ENCODE measurements at regions of chr2 and their contacts with region 1.

Region 1: GRCh38 chr2:125959047-125959446 is 696.9 kb upstream of the GYPC start:
- DNase-seq: no peak
- H3K4me3 ChIP-seq: no peak overlapping the region
- H3K4me3 Mint-ChIP-seq: no peak overlapping the region
- H3K27ac Mint-ChIP-seq: no peak overlapping the region
- H3K4me1 ChIP-seq: no peaks in the 10 kb centered on the region
- H3K4me1 Mint-ChIP-seq: no peaks in the 10 kb centered on the region
- H3K27me3 ChIP-seq: no peaks in the 10 kb centered on the region
- H3K27me3 Mint-ChIP-seq: no peaks in the 10 kb centered on the region
- CTCF ChIP-seq: no peak

Region 2: DNA sequence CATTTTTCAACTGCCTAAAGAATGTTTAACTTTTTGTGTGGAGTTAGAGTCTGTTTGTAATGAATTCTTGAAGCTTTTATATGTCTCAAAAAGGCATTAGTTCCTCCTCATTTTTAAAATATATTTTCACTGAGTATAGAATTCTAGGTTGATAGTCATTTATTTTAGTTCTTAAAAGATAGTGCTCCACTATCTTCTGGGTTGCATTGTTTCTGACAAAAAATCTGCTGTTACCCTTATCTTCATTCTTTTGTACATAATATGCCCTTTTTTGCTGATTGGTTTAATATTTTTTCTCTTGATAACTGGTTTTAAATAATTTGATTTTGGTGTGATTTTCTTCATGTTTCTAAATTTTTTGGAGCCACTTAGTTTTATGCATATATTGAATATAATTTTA is 57.8 kb before region 1 on chr2:
- CTCF ChIA-PET with region 1: interaction called, 10 read pairs
- POLR2A ChIA-PET with region 1: no interaction called
- intact Hi-C with region 1: no loop called
- DNase-seq: no peak
- H3K4me3 ChIP-seq: no peak overlapping the region
- H3K4me3 Mint-ChIP-seq: no peak overlapping the region
- H3K27ac Mint-ChIP-seq: no peak overlapping the region
- H3K4me1 ChIP-seq: no peaks in the 10 kb centered on the region
- H3K4me1 Mint-ChIP-seq: no peaks in the 10 kb centered on the region
- H3K27me3 ChIP-seq: no peaks in the 10 kb centered on the region
- H3K27me3 Mint-ChIP-seq: no peaks in the 10 kb centered on the region
- CTCF ChIP-seq: no peak